Naive thymus-derived CD4-positive, alpha-beta T cell (primary cell): ENCODE measurements at regions of chrX and their contacts with region 1.

Region 1: GRCh38 chrX:155263854-155264628 is at the start of gene RAB39B:
- DNase-seq: peak; percentile 24 to 78 (median 62)
- ATAC-seq: peak; percentile 95
- H3K4me3 ChIP-seq: peak within 1 kb of the TSS; percentile 76
- H3K4me3 Mint-ChIP-seq: peak within 1 kb of the TSS; percentile 72 to 91 (median 78)
- H3K27ac ChIP-seq: peak within 1 kb of the TSS; percentile 93
- H3K27ac Mint-ChIP-seq: peak within 1 kb of the TSS; percentile 42 to 92 (median 85)
- H3K4me1 ChIP-seq: peaks cover 5 to 6% of the 10 kb centered on the region in 2 donors
- H3K4me1 Mint-ChIP-seq: peaks cover 3 to 38% (median 27%) of the 10 kb centered on the region in 7 donors
- H3K27me3 ChIP-seq: no peaks in the 10 kb centered on the region
- H3K27me3 Mint-ChIP-seq: no peaks in the 10 kb centered on the region
- total RNA-seq, gene RAB39B: 3.9 to 13.3 (median 10.3) TPM

Region 2: DNA sequence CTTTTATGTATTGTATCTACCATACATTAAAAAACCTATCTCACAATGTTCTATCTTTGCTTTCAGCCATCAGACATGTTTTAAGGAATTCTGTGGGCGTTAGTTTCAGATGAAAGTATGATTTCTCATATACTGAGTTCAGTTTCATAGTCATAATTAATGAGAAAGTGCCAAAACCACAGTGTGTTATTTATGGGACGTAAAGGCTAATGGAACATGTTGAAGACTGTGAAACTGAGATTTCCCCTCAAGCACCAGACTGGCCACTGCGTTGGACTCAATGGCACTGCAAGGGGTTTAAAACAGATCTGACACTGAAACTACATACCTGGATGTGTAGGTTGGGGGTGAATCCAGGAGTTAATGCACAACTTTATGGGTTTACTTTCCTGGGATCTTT is 273.5 kb before region 1 on chrX:
- CTCF ChIA-PET with region 1: no interaction called
- POLR2A ChIA-PET with region 1: no interaction called
- intact Hi-C with region 1: no loop called
- DNase-seq: no peak
- ATAC-seq: no peak
- H3K4me3 ChIP-seq: no peak overlapping the region
- H3K4me3 Mint-ChIP-seq: no peak overlapping the region
- H3K27ac ChIP-seq: no peak overlapping the region
- H3K27ac Mint-ChIP-seq: no peak overlapping the region
- H3K4me1 ChIP-seq: no peaks in the 10 kb centered on the region
- H3K4me1 Mint-ChIP-seq: no peaks in the 10 kb centered on the region
- H3K27me3 ChIP-seq: peaks cover 0 to 3% of the 10 kb centered on the region in 2 donors
- H3K27me3 Mint-ChIP-seq: peaks cover 0 to 5% (median 0%) of the 10 kb centered on the region in 5 donors

Region 3: GRCh38 chrX:155070975-155071693 is 192.9 kb before region 1 on chrX and contains the starts of genes BRCC3, CMC4 and MTCP1:
- CTCF ChIA-PET with region 1: no interaction called
- POLR2A ChIA-PET with region 1: interaction called, 3 read pairs
- intact Hi-C with region 1: loop called in 1 of 2 experiments (anchors 5 kb)
- DNase-seq: peak; percentile 62 to 77 (median 74)
- ATAC-seq: peak; percentile 90
- H3K4me3 ChIP-seq: peak within 1 kb of the TSS; percentile 76
- H3K4me3 Mint-ChIP-seq: peak within 1 kb of the TSS; percentile 81 to 94 (median 89)
- H3K27ac ChIP-seq: peak within 1 kb of the TSS; percentile 82
- H3K27ac Mint-ChIP-seq: peak within 1 kb of the TSS; percentile 83 to 96 (median 94)
- H3K4me1 ChIP-seq: peaks cover 6 to 12% of the 10 kb centered on the region in 2 donors
- H3K4me1 Mint-ChIP-seq: peaks cover 30 to 62% (median 54%) of the 10 kb centered on the region in 7 donors
- H3K27me3 ChIP-seq: no peaks in the 10 kb centered on the region
- H3K27me3 Mint-ChIP-seq: no peaks in the 10 kb centered on the region
- total RNA-seq, gene BRCC3: 11.5 to 27.8 (median 15.2) TPM
- total RNA-seq, gene CMC4: 3.1 to 6.0 (median 5.1) TPM
- total RNA-seq, gene MTCP1: 10.3 to 21.5 (median 17.1) TPM

Region 4: DNA sequence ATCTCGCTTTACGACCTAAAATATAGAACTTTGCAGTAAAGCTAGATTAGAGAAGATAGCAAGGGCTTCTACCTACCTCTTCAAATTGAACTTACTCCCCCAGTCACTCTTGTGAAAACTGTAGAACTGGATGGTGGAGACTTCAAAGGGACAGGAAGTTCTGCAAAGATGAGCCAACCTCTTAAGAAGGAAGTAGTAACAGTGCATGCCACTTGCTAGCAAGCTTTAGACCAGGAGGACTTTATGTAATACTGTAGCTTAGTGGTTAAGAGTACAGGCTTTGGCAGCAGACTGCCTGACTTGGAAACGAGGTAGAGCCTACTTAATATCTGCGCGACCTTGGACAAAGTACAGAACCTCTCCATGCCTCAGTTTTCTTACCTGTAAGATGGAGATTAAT is 75.3 kb before region 1 on chrX:
- CTCF ChIA-PET with region 1: no interaction called
- POLR2A ChIA-PET with region 1: no interaction called
- intact Hi-C with region 1: loop called in 1 of 2 experiments (anchors 2 kb)
- DNase-seq: peak in 7 of 9 donors; percentile 43 to 75 (median 65)
- ATAC-seq: peak; percentile 99
- H3K4me3 ChIP-seq: peak overlapping the region; percentile 29
- H3K4me3 Mint-ChIP-seq: peak overlapping the region; percentile 40 to 75 (median 68)
- H3K27ac ChIP-seq: peak overlapping the region; percentile 33
- H3K27ac Mint-ChIP-seq: peak overlapping the region; percentile 56 to 92 (median 79)
- H3K4me1 ChIP-seq: peaks cover 8 to 24% of the 10 kb centered on the region in 2 donors
- H3K4me1 Mint-ChIP-seq: peaks cover 11 to 62% (median 48%) of the 10 kb centered on the region in 7 donors
- H3K27me3 ChIP-seq: no peaks in the 10 kb centered on the region
- H3K27me3 Mint-ChIP-seq: no peaks in the 10 kb centered on the region

Region 5: DNA sequence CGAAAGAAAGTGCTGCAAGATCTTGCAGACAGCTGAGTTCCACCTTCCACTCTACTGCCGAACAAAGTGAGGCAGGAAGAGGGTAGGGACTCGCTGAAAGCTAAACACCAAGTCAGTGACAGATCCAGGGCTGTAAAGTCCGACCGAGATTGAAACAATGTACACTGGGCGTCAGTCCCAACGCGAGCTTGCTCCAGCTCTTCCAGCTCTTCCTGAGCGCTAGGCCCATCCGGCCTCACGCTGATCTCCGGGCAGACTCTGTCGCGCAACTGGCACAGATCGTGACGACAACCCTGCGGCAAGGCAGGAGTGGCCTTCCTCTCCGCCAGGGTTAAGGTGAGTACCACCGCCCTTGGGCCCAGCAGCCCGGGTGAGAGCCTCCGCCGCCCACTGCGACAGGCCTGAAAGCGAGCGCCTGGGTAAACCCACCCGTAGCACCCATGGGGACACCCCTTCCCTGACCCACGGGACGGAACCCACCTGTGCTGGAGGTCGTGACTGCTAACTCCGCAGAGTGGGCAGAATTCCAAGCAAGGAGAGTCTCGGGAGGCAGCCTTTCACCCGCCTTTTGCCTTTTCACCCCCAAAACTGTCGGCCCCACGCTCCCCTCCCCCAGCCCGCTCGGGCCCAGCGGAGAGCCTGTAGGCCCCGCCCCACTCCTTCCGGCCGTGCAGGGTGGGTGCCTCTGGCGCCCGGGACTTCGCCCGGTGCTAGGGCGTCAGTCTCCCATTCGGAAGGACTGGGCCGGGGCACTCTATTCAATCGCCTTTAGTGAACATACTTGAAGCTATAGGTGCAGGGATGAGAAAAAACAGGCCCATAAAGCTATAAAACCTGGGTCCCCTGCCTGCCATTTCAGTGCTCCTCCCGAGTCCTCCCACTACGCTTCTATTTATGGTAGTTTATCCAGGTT is 348.5 kb after region 1 on chrX and contains the start of gene TMLHE:
- CTCF ChIA-PET with region 1: no interaction called
- POLR2A ChIA-PET with region 1: no interaction called
- intact Hi-C with region 1: loop called in 1 of 2 experiments (anchors 10 kb)
- DNase-seq: peak; percentile 28 to 68 (median 48)
- ATAC-seq: peak; percentile 93
- H3K4me3 ChIP-seq: peak within 1 kb of the TSS; percentile 83
- H3K4me3 Mint-ChIP-seq: peak within 1 kb of the TSS; percentile 87 to 95 (median 91)
- H3K27ac ChIP-seq: peak within 1 kb of the TSS; percentile 96
- H3K27ac Mint-ChIP-seq: peak within 1 kb of the TSS; percentile 91 to 97 (median 95)
- H3K4me1 ChIP-seq: no peaks in the 10 kb centered on the region
- H3K4me1 Mint-ChIP-seq: peaks cover 8 to 43% (median 33%) of the 10 kb centered on the region in 7 donors
- H3K27me3 ChIP-seq: no peaks in the 10 kb centered on the region
- H3K27me3 Mint-ChIP-seq: no peaks in the 10 kb centered on the region
- total RNA-seq, gene TMLHE: 11.8 to 17.7 (median 14.6) TPM

Region 6: DNA sequence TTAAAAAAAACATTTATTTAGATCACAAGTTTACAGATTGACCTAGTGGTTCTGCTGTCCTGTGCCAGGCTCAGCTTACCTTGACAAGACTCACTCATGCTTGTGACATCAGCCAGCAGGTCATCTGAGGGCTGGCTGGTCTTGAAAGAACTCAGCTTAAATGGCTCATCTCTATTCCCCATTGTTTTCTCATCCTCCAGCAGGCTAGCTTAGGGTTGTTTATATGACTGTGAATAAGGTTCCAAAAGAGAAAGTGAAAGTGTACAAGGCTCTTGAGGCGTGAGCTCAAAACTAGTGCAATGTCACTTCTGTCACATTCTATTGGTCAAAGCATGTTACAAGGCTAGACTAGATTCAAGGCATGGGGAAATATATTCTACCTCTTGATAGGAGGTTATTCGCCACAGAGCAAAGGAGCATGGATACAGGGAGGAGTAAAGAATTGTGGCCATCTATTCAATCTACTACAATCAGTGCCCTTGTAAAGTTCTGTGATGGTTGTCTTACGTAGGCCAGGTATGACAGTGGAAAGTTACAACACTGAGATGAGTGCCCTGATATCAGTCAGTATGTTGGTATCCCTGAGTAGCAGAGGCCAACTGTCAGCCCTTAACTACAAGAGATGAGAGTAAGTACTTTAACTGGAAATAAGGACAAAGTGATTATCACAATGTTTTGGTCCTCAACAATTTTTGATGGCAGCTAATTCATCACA is 368.5 kb after region 1 on chrX:
- CTCF ChIA-PET with region 1: no interaction called
- POLR2A ChIA-PET with region 1: no interaction called
- intact Hi-C with region 1: loop called in 1 of 2 experiments (anchors 10 kb)
- DNase-seq: peak in 7 of 9 donors; percentile 3 to 34 (median 18)
- ATAC-seq: peak; percentile 82
- H3K4me3 ChIP-seq: peak overlapping the region; percentile 12
- H3K4me3 Mint-ChIP-seq: peak overlapping the region; percentile 15 to 88 (median 80)
- H3K27ac ChIP-seq: peak overlapping the region; percentile 18
- H3K27ac Mint-ChIP-seq: peak overlapping the region; percentile 40 to 96 (median 87)
- H3K4me1 ChIP-seq: no peaks in the 10 kb centered on the region
- H3K4me1 Mint-ChIP-seq: peaks cover 0 to 12% (median 11%) of the 10 kb centered on the region in 7 donors
- H3K27me3 ChIP-seq: no peaks in the 10 kb centered on the region
- H3K27me3 Mint-ChIP-seq: no peaks in the 10 kb centered on the region

Region 7: DNA sequence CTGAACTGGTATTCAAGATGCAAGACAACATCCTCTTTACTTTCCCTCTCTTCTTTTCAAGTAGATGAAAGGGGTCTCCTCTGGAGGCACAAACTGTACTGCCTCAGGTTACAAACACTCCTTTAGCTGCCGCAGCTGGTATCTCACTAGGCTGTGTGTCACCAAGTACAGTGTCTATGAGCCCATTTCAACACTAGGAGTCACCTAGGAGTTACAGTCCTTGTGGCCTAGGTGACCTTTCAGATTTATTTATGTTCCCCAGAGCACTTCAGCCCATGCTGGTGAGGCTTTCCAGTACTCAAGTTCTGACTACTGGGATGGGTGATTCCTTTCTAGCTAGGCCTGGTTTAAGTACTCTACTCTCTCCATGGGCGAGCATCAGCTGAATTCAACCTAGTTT is 381.1 kb after region 1 on chrX:
- CTCF ChIA-PET with region 1: no interaction called
- POLR2A ChIA-PET with region 1: no interaction called
- intact Hi-C with region 1: no loop called
- DNase-seq: no peak
- ATAC-seq: no peak
- H3K4me3 ChIP-seq: no peak overlapping the region
- H3K4me3 Mint-ChIP-seq: no peak overlapping the region
- H3K27ac ChIP-seq: no peak overlapping the region
- H3K27ac Mint-ChIP-seq: no peak overlapping the region
- H3K4me1 ChIP-seq: no peaks in the 10 kb centered on the region
- H3K4me1 Mint-ChIP-seq: peaks cover 0 to 12% (median 5%) of the 10 kb centered on the region in 7 donors
- H3K27me3 ChIP-seq: no peaks in the 10 kb centered on the region
- H3K27me3 Mint-ChIP-seq: peaks cover 0 to 5% (median 4%) of the 10 kb centered on the region in 5 donors

Region 8: GRCh38 chrX:155767051-155767875 is 503.2 kb after region 1 on chrX:
- CTCF ChIA-PET with region 1: no interaction called
- POLR2A ChIA-PET with region 1: no interaction called
- intact Hi-C with region 1: loop called in 1 of 2 experiments (anchors 10 kb)
- DNase-seq: peak in 8 of 9 donors; percentile 2 to 38 (median 22)
- ATAC-seq: peak; percentile 51
- H3K4me3 ChIP-seq: peak overlapping the region; percentile 16
- H3K4me3 Mint-ChIP-seq: peak overlapping the region; percentile 79 to 90 (median 86)
- H3K27ac ChIP-seq: peak overlapping the region; percentile 7
- H3K27ac Mint-ChIP-seq: peak overlapping the region in 7 of 9 donors; percentile 16 to 90 (median 45)
- H3K4me1 ChIP-seq: no peaks in the 10 kb centered on the region
- H3K4me1 Mint-ChIP-seq: peaks cover 0 to 12% (median 6%) of the 10 kb centered on the region in 7 donors
- H3K27me3 ChIP-seq: no peaks in the 10 kb centered on the region
- H3K27me3 Mint-ChIP-seq: no peaks in the 10 kb centered on the region

Region 9: GRCh38 chrX:155881158-155881993 is 617.3 kb after region 1 on chrX and contains the start of gene VAMP7:
- CTCF ChIA-PET with region 1: no interaction called
- POLR2A ChIA-PET with region 1: no interaction called
- intact Hi-C with region 1: loop called (anchors 2 kb)
- DNase-seq: peak; percentile 47 to 82 (median 71)
- ATAC-seq: peak; percentile 99
- H3K4me3 ChIP-seq: peak within 1 kb of the TSS; percentile 55
- H3K4me3 Mint-ChIP-seq: peak within 1 kb of the TSS; percentile 86 to 97 (median 92)
- H3K27ac ChIP-seq: peak within 1 kb of the TSS; percentile 78
- H3K27ac Mint-ChIP-seq: peak within 1 kb of the TSS; percentile 63 to 98 (median 92)
- H3K4me1 ChIP-seq: peaks cover 0 to 5% of the 10 kb centered on the region in 2 donors
- H3K4me1 Mint-ChIP-seq: peaks cover 19 to 40% (median 34%) of the 10 kb centered on the region in 7 donors
- H3K27me3 ChIP-seq: no peaks in the 10 kb centered on the region
- H3K27me3 Mint-ChIP-seq: peaks cover 0 to 6% (median 4%) of the 10 kb centered on the region in 5 donors
- total RNA-seq, gene VAMP7: 18.5 to 32.5 (median 21.0) TPM